WTC11 (cell line): ENCODE measurements at regions of chr22 and their contacts with region 1.

Region 1: GRCh38 chr22:49305214-49305909 is 522.3 kb downstream of the BRD1 start:
- DNase-seq: peak; percentile 94
- ATAC-seq: peak; percentile 91
- H3K4me3 Mint-ChIP-seq: no peak overlapping the region
- H3K27ac Mint-ChIP-seq: no peak overlapping the region
- H3K4me1 Mint-ChIP-seq: no peaks in the 10 kb centered on the region
- H3K27me3 Mint-ChIP-seq: no peaks in the 10 kb centered on the region; the same call in 1 of the 2 replicates
- CTCF ChIP-seq: peak; percentile 96

Region 2: DNA sequence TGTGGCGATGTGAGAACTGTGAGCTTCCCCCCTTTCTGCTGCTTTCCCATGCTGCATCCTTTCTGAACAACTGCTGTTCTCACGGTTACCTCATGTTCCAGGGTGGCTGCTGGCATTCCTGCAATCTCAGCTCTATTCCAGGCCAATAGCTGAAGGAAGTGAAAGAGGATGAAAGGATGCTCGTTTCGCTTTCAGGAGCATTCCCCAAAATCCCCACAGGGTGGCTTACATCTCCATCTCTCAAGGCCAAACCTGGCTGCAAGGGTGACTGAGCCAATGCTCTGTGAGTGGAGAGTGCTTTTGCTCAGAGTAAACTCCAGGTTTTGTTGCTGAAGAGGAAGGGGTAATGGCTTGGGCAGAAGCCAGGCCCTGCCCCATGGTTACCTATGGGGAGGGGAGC is 325.9 kb before region 1 on chr22:
- CTCF ChIA-PET with region 1: interaction called, 10 read pairs
- POLR2A ChIA-PET with region 1: no interaction called
- DNase-seq: peak; percentile 45
- ATAC-seq: peak; percentile 79
- H3K4me3 Mint-ChIP-seq: no peak overlapping the region
- H3K27ac Mint-ChIP-seq: no peak overlapping the region
- H3K4me1 Mint-ChIP-seq: peaks cover 9% of the 10 kb centered on the region
- H3K27me3 Mint-ChIP-seq: peaks cover 4% of the 10 kb centered on the region; the same call in 1 of the 2 replicates
- CTCF ChIP-seq: no peak

Region 3: DNA sequence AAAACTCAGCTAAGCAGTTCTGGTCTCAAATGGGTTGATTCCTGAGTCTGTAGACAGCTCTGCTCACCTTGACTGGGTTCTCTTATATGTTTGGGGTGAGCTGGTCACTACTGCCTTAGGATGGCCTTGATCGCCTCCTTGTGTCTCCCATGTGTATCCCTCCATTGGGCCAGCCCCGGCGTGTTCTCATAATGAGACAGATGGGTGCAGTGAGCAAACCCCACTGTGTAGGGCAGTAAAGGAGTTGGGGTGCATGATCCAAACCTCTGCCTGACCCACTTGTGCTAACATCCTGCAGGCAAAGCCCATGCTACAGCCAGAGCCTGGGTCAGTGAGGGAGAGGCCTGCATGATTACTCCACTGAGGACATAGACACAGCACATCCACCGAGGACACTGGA is 135.3 kb before region 1 on chr22:
- CTCF ChIA-PET with region 1: interaction called, 14 read pairs
- POLR2A ChIA-PET with region 1: no interaction called
- DNase-seq: peak; percentile 36
- ATAC-seq: peak; percentile 65; the same call in 1 of the 2 replicates
- H3K4me3 Mint-ChIP-seq: no peak overlapping the region
- H3K27ac Mint-ChIP-seq: no peak overlapping the region
- H3K4me1 Mint-ChIP-seq: no peaks in the 10 kb centered on the region; the same call in 1 of the 2 replicates
- H3K27me3 Mint-ChIP-seq: peaks cover 4% of the 10 kb centered on the region
- CTCF ChIP-seq: no peak

Region 4: DNA sequence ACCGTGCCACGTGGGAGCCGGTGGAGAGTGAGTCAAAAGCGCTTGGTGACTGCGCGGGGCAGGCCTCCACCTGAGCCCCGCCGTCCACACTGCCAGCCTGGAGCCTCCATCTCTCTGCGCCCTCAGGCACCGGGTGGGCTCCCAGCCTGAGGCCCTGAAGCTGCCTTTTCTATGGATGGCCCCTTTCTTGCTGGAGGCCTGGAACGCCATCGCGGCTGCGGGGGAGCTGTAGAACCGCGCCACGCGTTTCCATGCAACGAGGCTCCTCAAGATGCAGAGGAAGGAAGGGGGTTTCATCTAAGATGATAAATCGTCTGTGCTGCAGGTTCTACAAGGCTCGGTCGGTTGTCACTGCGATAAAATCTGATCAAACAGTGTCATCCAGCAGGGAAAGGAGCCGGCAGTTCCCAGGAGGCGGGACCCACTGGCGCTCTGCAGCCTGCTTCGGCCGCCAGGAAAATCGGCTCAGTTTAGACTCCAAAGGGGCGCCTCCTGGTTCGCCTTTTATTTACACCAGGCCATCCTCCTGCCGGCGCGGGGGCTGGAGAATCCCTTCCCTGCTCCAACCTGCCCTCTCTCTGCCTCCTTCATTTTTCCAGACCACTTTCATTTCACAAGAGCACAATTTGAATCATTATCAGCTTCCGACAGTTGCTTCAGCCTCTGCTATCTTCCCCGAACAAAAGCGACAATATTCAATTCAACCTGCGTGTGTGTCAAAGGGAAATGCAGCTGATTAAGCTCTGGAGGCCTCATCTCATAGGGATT is 102.1 kb before region 1 on chr22:
- CTCF ChIA-PET with region 1: interaction called, 10 read pairs
- POLR2A ChIA-PET with region 1: no interaction called
- DNase-seq: peak; percentile 10
- ATAC-seq: no peak
- H3K4me3 Mint-ChIP-seq: no peak overlapping the region
- H3K27ac Mint-ChIP-seq: no peak overlapping the region
- H3K4me1 Mint-ChIP-seq: peaks cover 6% of the 10 kb centered on the region; the same call in 1 of the 2 replicates
- H3K27me3 Mint-ChIP-seq: no peaks in the 10 kb centered on the region
- CTCF ChIP-seq: no peak

Region 5: DNA sequence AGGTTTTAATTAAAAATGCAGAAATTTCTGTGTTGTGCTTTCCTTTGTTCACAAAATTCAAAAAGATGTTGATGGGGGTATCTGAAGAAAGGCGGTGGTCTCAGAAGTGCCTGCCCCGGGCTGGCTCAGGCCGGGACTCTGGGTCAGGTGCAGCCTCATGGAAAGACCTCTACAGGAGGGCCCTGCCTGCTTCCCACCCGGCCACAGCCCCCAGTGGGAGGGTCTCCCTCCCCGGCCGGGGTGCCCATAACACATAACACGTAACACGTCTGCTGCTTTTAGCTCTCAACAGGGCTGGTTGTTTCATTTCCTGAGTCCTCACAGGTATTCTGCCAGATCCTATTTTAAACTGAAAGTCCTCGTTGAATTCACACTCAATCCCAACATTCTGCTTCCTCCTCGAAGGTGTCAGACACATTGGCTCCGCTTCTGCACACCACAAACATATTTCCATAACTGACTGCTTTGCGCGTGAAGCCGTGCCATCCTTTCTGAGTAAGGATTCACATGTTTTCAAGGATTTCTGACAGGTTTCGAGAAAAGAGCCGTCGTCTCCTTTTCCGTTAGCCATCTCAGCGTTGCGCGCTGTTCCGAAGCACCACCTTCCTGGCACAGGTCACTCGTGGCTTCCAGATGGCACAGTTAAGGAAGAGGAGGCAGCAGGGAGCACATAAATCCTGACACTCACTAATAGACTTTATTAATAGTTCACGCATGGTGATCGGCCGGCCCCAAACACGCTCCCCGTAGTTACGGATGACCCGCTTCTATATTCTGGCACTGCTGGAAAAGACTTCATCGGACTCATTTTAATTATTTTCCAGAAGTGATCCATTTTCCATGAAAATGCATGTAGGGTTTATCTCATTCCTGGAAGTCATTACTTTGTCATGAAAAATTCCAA is 47.0 kb before region 1 on chr22:
- CTCF ChIA-PET with region 1: no interaction called
- POLR2A ChIA-PET with region 1: no interaction called
- DNase-seq: no peak
- ATAC-seq: no peak
- H3K4me3 Mint-ChIP-seq: no peak overlapping the region
- H3K27ac Mint-ChIP-seq: no peak overlapping the region
- H3K4me1 Mint-ChIP-seq: peaks cover 13% of the 10 kb centered on the region
- H3K27me3 Mint-ChIP-seq: peaks cover 4% of the 10 kb centered on the region
- CTCF ChIP-seq: no peak

Region 6: GRCh38 chr22:49321477-49322055 is 16.2 kb after region 1 on chr22:
- CTCF ChIA-PET with region 1: interaction called, 10 read pairs
- POLR2A ChIA-PET with region 1: no interaction called
- DNase-seq: no peak
- ATAC-seq: no peak
- H3K4me3 Mint-ChIP-seq: no peak overlapping the region
- H3K27ac Mint-ChIP-seq: no peak overlapping the region
- H3K4me1 Mint-ChIP-seq: no peaks in the 10 kb centered on the region
- H3K27me3 Mint-ChIP-seq: no peaks in the 10 kb centered on the region
- CTCF ChIP-seq: no peak

Region 7: GRCh38 chr22:49350441-49351121 is 45.2 kb after region 1 on chr22:
- CTCF ChIA-PET with region 1: no interaction called
- POLR2A ChIA-PET with region 1: no interaction called
- DNase-seq: peak; percentile 8
- ATAC-seq: no peak
- H3K4me3 Mint-ChIP-seq: no peak overlapping the region
- H3K27ac Mint-ChIP-seq: no peak overlapping the region
- H3K4me1 Mint-ChIP-seq: peaks cover 4% of the 10 kb centered on the region; the same call in 1 of the 2 replicates
- H3K27me3 Mint-ChIP-seq: no peaks in the 10 kb centered on the region
- CTCF ChIP-seq: no peak

Region 8: DNA sequence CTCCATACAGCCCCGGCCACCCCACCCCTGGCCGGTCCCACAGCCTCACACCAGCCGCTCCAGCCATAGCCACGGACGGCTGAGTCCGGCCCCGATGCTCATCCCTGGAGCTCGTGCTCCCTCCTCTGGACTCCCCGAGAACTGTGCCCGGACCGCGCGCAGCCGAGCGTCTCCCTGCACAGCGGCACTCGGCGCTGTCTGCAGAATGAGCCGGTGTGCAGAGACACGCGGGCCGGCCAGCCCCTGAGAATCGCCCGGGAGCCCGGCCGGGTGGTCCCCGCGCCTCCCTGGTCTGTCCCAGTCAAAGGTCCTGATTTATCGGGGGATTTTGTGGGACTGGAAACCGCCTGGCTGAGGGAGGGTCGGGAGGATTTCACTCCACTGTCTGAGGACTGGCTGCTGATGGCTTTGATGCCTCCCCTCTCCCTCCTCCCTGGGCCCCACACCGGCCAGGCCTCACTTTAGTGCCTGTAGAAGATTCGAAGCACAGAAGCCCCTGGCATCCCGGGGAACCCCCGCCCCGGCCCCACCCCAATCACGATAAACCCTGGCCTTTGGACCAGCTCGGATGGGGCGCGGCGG is 419.6 kb after region 1 on chr22:
- CTCF ChIA-PET with region 1: interaction called, 11 read pairs
- POLR2A ChIA-PET with region 1: no interaction called
- DNase-seq: peak; percentile 85
- ATAC-seq: peak; percentile 97
- H3K4me3 Mint-ChIP-seq: no peak overlapping the region
- H3K27ac Mint-ChIP-seq: no peak overlapping the region
- H3K4me1 Mint-ChIP-seq: no peaks in the 10 kb centered on the region
- H3K27me3 Mint-ChIP-seq: peaks cover 32% of the 10 kb centered on the region
- CTCF ChIP-seq: peak; percentile 33; the same call in 1 of the 2 replicates